ENCODE measurements at regions of chr1 and their contacts with region 1.

Region 1: DNA sequence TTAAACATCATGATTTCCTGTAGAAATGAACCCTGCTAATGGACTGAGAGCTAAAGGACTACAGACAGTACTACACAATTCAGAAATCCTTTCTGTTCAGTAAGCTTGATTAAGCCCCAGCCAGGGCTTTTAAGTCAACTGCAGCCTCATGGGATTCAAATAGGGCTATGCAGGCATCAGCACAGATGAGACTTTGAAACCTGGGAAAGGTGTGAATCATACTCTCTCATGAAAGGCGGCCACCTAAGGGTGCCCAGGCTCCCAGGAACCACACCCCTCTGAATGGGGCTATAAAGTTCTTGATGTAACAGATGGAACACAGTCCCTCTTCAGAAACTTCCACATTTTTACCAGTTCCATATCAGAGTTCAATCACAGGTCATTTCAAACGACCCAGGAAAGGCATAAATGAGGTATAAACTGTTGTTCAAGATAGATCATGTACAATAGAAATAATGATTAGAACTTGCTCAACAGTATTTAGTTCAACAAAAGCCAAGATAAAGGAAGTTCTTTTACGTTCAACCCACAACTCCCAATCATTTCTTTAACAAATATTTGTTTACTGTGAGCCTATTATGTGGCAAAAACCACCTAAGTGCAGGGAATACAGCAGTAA is 7.4 kb downstream of the SIPA1L2 start:
- DNase-seq: no peak
- ATAC-seq: peak; percentile 54; the same call in 1 of the 2 replicates
- H3K4me3 ChIP-seq: peak overlapping the region in 1 of 2 experiments; percentile 16; a peak in 1 of 4 replicates
- H3K27ac ChIP-seq: peak overlapping the region; percentile 66; the same call in 1 of the 2 replicates
- H3K4me1 ChIP-seq: peaks cover 14% of the 10 kb centered on the region
- H3K27me3 ChIP-seq: peaks cover 2% of the 10 kb centered on the region; the same call in 1 of the 2 replicates
- CTCF ChIP-seq: no peak

Region 2: GRCh38 chr1:232667778-232668165 is 45.3 kb after region 1 on chr1:
- CTCF ChIA-PET with region 1: no interaction called
- POLR2A ChIA-PET with region 1: interaction called, 21 read pairs
- in situ Hi-C with region 1: no loop called
- intact Hi-C with region 1: no loop called
- DNase-seq: no peak
- ATAC-seq: no peak
- H3K4me3 ChIP-seq: no peak overlapping the region
- H3K27ac ChIP-seq: no peak overlapping the region
- H3K4me1 ChIP-seq: no peaks in the 10 kb centered on the region
- H3K27me3 ChIP-seq: no peaks in the 10 kb centered on the region
- CTCF ChIP-seq: no peak

Measured in Panc1 (cell line).